CD4-positive, alpha-beta T cell (primary cell): ENCODE measurements at regions of chr13 and their contacts with region 1.

Region 1: GRCh38 chr13:75549262-75550158 is at the start of gene UCHL3:
- DNase-seq: peak; percentile 95 to 99 (median 97)
- ATAC-seq: peak; percentile 93
- H3K4me3 ChIP-seq: peak within 1 kb of the TSS; percentile 93
- H3K4me3 Mint-ChIP-seq: peak within 1 kb of the TSS; percentile 97
- H3K27ac ChIP-seq: peak within 1 kb of the TSS; percentile 76 to 91
- H3K27ac Mint-ChIP-seq: peak within 1 kb of the TSS; percentile 89
- H3K4me1 ChIP-seq: peaks cover 18% of the 10 kb centered on the region
- H3K4me1 Mint-ChIP-seq: peaks cover 47% of the 10 kb centered on the region
- H3K27me3 ChIP-seq: no peaks in the 10 kb centered on the region
- H3K27me3 Mint-ChIP-seq: no peaks in the 10 kb centered on the region
- CTCF ChIP-seq: peak; percentile 96
- total RNA-seq, gene UCHL3: 16.0 to 17.7 TPM

Region 2: GRCh38 chr13:75326173-75327134 is 223.1 kb before region 1 on chr13:
- CTCF ChIA-PET with region 1: no interaction called
- POLR2A ChIA-PET with region 1: interaction called, 7 read pairs
- intact Hi-C with region 1: loop called in 1 of 2 experiments (anchors 2 kb)
- DNase-seq: peak; percentile 12 to 92 (median 40)
- ATAC-seq: peak; percentile 86
- H3K4me3 ChIP-seq: peak overlapping the region; percentile 75
- H3K4me3 Mint-ChIP-seq: peak overlapping the region; percentile 92
- H3K27ac ChIP-seq: peak overlapping the region; percentile 89 to 93
- H3K27ac Mint-ChIP-seq: peak overlapping the region; percentile 93
- H3K4me1 ChIP-seq: peaks cover 5% of the 10 kb centered on the region
- H3K4me1 Mint-ChIP-seq: peaks cover 57% of the 10 kb centered on the region
- H3K27me3 ChIP-seq: no peaks in the 10 kb centered on the region
- H3K27me3 Mint-ChIP-seq: no peaks in the 10 kb centered on the region
- CTCF ChIP-seq: no peak

Region 3: GRCh38 chr13:75482070-75482819 is 67.3 kb before region 1 on chr13 and contains the start of gene TBC1D4:
- CTCF ChIA-PET with region 1: interaction called, 4 read pairs
- POLR2A ChIA-PET with region 1: no interaction called
- intact Hi-C with region 1: loop called in 1 of 2 experiments (anchors 5 kb)
- DNase-seq: peak in 13 of 14 experiments; percentile 6 to 73 (median 33)
- ATAC-seq: peak; percentile 54
- H3K4me3 ChIP-seq: peak within 1 kb of the TSS; percentile 76
- H3K4me3 Mint-ChIP-seq: peak within 1 kb of the TSS; percentile 98
- H3K27ac ChIP-seq: no peak within 1 kb of the TSS
- H3K27ac Mint-ChIP-seq: no peak within 1 kb of the TSS
- H3K4me1 ChIP-seq: peaks cover 12% of the 10 kb centered on the region
- H3K4me1 Mint-ChIP-seq: peaks cover 12% of the 10 kb centered on the region
- H3K27me3 ChIP-seq: peaks cover 41 to 73% of the 10 kb centered on the region in 2 experiments
- H3K27me3 Mint-ChIP-seq: peaks cover 90% of the 10 kb centered on the region
- CTCF ChIP-seq: peak; percentile 65
- total RNA-seq, gene TBC1D4: 37.4 to 42.0 TPM

Region 4: DNA sequence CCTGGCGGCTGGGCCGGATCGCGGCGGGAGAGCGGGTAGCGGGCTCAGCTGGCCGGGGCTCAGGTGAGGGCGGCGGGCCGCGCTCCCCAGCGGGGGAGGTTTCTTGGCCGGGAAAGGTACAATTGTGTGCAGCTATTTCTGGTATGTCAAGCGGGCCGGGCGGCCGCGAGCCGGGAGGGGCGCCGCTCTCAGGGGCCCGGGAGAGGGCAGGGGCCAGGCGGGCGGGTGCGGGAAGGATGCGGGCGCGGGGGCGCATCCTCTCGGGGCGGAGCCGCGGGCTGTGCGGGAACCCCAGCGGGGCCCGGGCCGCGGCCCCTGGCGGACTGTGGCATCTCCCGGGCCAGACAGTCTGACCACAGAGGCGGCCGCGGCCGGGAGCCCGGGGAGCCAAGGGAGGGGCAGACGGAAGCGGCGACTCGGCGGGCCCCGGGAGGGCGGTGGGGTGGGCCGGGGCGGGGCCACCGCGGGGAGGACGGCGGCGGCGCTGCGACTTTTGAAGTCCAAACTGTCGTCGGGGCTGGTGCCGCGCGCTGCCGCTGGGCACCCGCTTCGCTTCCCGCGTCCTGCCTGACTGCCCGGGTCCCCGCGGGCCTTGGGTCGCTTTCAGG is 86.4 kb after region 1 on chr13 and contains the start of gene LMO7:
- CTCF ChIA-PET with region 1: no interaction called
- POLR2A ChIA-PET with region 1: no interaction called
- intact Hi-C with region 1: loop called in 1 of 2 experiments (anchors 5 kb)
- DNase-seq: peak; percentile 11 to 77 (median 42)
- ATAC-seq: peak; percentile 56
- H3K4me3 ChIP-seq: peak within 1 kb of the TSS; percentile 70
- H3K4me3 Mint-ChIP-seq: peak within 1 kb of the TSS; percentile 90
- H3K27ac ChIP-seq: no peak within 1 kb of the TSS
- H3K27ac Mint-ChIP-seq: peak within 1 kb of the TSS; percentile 84
- H3K4me1 ChIP-seq: peaks cover 15% of the 10 kb centered on the region
- H3K4me1 Mint-ChIP-seq: peaks cover 24% of the 10 kb centered on the region
- H3K27me3 ChIP-seq: no peaks in the 10 kb centered on the region
- H3K27me3 Mint-ChIP-seq: peaks cover 10% of the 10 kb centered on the region
- CTCF ChIP-seq: no peak
- total RNA-seq, gene LMO7: 35.2 to 36.3 TPM

Region 5: DNA sequence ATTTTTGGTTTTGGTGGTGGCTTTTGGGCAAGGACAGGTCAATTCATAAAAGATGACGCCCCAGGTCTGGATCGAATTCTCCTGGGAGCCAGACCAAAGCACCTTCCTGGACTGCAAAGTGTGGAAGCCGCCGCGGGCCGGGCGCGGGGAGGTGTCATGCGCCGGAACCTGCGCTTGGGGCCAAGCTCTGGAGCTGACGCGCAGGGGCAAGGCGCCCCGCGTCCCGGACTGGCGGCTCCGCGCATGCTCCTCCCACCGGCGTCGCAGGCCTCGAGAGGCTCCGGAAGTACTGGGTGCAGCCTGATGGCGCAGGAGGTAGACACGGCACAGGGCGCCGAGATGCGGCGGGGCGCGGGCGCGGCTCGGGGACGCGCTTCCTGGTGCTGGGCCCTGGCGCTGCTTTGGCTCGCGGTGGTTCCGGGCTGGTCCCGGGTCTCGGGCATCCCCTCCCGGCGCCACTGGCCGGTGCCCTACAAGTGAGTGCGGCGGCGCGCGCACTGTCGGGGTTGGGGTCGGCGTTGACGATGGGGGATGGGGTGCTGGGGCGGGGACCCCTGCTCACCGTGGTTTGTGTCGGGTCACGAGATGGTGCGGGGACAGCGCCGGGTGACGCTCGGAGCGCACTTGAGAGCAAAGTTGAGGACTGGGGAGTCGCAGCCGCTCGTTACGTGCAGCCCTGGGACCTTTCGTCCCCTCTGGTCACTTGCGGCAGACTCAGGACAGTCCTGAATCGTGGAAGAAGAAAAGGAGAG is 1442.5 kb after region 1 on chr13 and contains the start of gene CLN5:
- CTCF ChIA-PET with region 1: no interaction called
- POLR2A ChIA-PET with region 1: no interaction called
- intact Hi-C with region 1: loop called in 1 of 2 experiments (anchors 10 kb)
- DNase-seq: peak; percentile 89 to 99 (median 95)
- ATAC-seq: peak; percentile 85
- H3K4me3 ChIP-seq: peak within 1 kb of the TSS; percentile 72
- H3K4me3 Mint-ChIP-seq: peak within 1 kb of the TSS; percentile 97
- H3K27ac ChIP-seq: peak within 1 kb of the TSS; percentile 89 to 95
- H3K27ac Mint-ChIP-seq: peak within 1 kb of the TSS; percentile 99
- H3K4me1 ChIP-seq: peaks cover 30% of the 10 kb centered on the region
- H3K4me1 Mint-ChIP-seq: peaks cover 60% of the 10 kb centered on the region
- H3K27me3 ChIP-seq: no peaks in the 10 kb centered on the region
- H3K27me3 Mint-ChIP-seq: no peaks in the 10 kb centered on the region
- CTCF ChIP-seq: no peak
- total RNA-seq, gene CLN5: 37.4 to 42.9 TPM